ENCODE measurements at regions of chr11 and their contacts with region 1.

Region 1: GRCh38 chr11:17528181-17528691 is 16.0 kb downstream of the USH1C start:
- DNase-seq: peak; percentile 67 to 84
- H3K4me3 ChIP-seq: no peak overlapping the region
- H3K4me1 ChIP-seq: no peaks in the 10 kb centered on the region
- H3K27me3 ChIP-seq: no peaks in the 10 kb centered on the region; the same call in none of the 2 replicates

Region 2: GRCh38 chr11:17179970-17180369 is 348.3 kb before region 1 on chr11:
- in situ Hi-C with region 1: no loop called
- DNase-seq: no peak
- H3K4me3 ChIP-seq: no peak overlapping the region
- H3K4me1 ChIP-seq: no peaks in the 10 kb centered on the region
- H3K27me3 ChIP-seq: no peaks in the 10 kb centered on the region

Region 3: GRCh38 chr11:17371614-17372013 is 156.6 kb before region 1 on chr11:
- in situ Hi-C with region 1: no loop called
- DNase-seq: no peak
- H3K4me3 ChIP-seq: no peak overlapping the region
- H3K4me1 ChIP-seq: no peaks in the 10 kb centered on the region
- H3K27me3 ChIP-seq: no peaks in the 10 kb centered on the region

Region 4: DNA sequence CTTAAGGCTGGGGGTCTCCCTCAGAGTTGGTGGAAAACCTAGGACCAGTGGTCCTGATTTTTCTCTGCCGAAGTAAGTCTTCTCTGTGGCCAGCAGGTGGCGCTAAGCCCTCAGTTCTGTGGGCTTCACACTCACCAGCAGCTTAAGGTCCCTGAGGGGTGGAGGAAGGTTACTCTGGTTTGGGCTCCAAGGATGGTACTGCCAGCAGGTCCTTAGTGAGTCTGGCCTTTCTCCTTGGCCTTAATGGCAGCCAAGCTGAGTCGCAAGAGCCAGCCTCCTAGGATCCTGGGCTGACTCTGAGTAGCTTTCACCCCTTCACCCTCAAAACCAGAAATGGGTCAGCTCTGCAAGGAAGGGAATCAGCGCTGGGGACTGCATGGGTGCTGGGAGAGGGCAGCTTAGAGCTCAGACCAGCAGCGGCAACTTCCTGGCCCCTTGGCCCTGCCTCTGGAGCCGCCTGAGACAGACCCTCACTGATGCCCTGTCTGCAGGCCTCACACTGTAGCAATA is 144.2 kb before region 1 on chr11:
- in situ Hi-C with region 1: loop called (anchors 10 kb)
- DNase-seq: peak; percentile 73 to 87
- H3K4me3 ChIP-seq: no peak overlapping the region
- H3K4me1 ChIP-seq: no peaks in the 10 kb centered on the region
- H3K27me3 ChIP-seq: no peaks in the 10 kb centered on the region